ENCODE measurements at regions of chr19 and their contacts with region 1.

Region 1: DNA sequence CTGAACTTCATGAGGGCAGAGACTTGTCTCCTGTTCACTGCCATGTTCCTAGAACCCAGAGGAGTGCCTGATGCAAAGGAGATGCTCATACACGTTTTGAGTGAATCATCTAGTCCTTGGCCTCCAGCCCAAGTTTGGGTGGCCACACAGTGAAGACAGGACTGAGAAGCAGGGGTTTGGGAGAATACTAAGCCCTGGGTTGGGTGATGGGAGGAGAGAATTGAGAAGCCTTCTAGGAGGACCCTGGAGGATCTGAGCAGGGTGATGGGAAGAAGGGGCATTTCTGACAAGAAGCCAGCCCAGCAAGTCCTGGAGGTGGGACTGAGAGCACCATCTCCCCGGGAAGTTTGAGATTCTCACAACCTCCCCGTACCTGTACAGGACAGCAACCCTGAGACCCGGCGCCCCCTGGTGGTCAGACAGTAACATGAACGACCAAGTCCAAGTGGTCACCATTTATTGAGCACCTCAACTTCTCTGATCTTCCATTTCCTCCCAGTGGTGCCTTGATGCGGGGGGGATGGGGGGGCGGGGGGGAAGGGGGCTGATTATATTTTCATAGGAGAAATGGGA is 11.0 kb downstream of the CTU1 start:
- DNase-seq: peak; percentile 62
- H3K4me3 ChIP-seq: no peak overlapping the region
- H3K27ac ChIP-seq: no peak overlapping the region
- H3K4me1 ChIP-seq: no peaks in the 10 kb centered on the region
- H3K27me3 ChIP-seq: no peaks in the 10 kb centered on the region
- CTCF ChIP-seq: peak; percentile 15

Region 2: DNA sequence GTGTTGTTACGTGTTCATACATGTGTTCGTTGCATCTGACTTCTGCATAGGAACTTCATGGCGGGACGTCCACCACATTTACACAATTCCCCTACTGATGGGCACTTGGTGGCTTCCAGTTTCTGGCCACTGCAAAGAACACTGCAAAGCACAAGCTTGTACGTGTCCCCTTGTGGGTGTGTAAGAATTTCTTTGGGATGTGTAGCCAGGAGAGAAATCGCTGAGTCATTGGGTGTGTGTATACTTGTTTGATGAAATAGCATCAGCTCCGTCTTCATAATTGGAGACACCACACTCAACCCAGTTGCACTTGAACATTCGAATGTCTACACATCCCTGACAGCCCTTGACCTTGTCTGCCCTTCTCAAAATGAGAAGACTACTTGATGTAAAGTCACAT is 163.6 kb before region 1 on chr19:
- intact Hi-C with region 1: loop called (anchors 5 kb)
- DNase-seq: no peak
- H3K4me3 ChIP-seq: no peak overlapping the region
- H3K27ac ChIP-seq: no peak overlapping the region
- H3K4me1 ChIP-seq: no peaks in the 10 kb centered on the region
- H3K27me3 ChIP-seq: no peaks in the 10 kb centered on the region
- CTCF ChIP-seq: no peak

Region 3: DNA sequence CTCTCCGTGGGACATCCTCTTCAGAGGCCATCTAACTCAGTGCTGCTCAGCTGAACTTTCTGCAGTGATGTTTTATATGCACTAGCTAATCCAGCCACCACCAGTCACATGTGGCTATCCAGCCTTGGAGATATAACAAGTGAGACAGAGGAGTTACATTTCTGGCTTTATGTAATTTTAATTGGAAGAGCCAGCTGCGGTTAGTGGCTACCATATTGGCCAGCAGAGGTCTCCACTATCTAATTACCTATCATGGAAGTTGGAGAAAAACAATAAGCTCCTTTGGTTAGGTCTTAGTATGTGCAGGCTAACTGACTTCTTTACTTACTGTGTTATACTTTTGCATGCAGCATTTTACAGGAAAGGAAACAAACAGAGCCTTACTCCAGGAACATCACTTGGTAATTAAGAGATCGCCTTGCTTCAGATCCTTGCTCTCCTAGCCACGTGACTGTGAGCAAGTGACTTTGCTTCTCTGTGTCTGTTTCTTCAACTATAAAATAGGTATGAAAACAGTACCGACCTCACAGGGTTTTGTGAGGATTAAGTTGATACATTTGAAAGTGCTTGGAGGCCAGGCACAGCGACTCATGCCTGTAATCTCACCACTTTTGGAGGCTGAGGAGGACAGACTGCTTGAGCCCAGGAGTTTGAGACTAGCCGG is 76.1 kb before region 1 on chr19:
- intact Hi-C with region 1: loop called (anchors 5 kb)
- DNase-seq: no peak
- H3K4me3 ChIP-seq: no peak overlapping the region
- H3K27ac ChIP-seq: no peak overlapping the region
- H3K4me1 ChIP-seq: peaks cover 7% of the 10 kb centered on the region
- H3K27me3 ChIP-seq: peaks cover 27% of the 10 kb centered on the region
- CTCF ChIP-seq: peak; percentile 56

Region 4: GRCh38 chr19:51448011-51448744 is 350.9 kb after region 1 on chr19:
- intact Hi-C with region 1: no loop called
- DNase-seq: no peak
- H3K4me3 ChIP-seq: no peak overlapping the region
- H3K27ac ChIP-seq: no peak overlapping the region
- H3K4me1 ChIP-seq: no peaks in the 10 kb centered on the region
- H3K27me3 ChIP-seq: no peaks in the 10 kb centered on the region
- CTCF ChIP-seq: no peak

Measured in colonic mucosa (tissue), 4 donors.